CD4-positive, alpha-beta memory T cell (primary cell): ENCODE measurements at regions of chr15 and their contacts with region 1.

Region 1: DNA sequence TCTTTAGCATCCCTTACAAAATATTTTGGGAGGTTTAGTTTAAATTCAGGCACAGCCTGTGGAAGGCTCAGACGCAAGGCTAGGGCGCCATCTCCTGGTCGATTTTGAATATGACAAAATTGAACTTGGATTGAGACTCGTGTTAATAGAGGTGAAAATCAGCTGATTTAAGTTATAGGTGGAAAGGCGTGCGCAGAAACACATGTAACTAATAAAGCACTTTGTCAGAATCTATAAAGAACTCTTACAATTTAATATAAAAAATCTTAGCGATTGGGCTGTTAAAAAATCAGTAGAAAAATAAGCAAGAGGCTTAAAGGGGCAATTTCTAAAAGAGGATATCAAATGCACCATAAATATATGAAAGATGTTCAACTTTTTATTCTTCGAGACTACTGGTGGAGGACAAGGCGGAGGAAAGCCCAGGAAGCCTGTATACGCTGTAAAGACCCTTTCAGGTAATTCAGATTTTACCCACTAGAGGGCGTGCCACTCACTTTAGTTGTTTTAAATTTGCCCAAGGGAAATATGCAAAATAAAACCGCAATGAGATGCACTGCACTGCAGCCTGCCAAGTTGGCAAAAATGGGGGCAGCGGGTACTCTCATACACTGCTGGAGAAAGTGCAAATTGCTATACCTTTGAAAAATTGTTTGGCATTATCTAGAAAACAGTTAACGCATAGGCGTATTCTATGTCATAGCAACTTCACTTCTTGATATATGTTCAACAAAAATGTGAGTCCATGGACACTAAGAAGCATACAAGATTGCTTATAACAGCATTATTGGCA is 64.7 kb downstream of the SLC30A4 start:
- DNase-seq: peak; percentile 79 to 84 (median 81)
- H3K4me3 ChIP-seq: peak overlapping the region; percentile 21 to 51
- H3K4me3 Mint-ChIP-seq: peak overlapping the region; percentile 86 to 94 (median 88)
- H3K27ac ChIP-seq: peak overlapping the region; percentile 61
- H3K27ac Mint-ChIP-seq: peak overlapping the region; percentile 89 to 98 (median 96)
- H3K4me1 ChIP-seq: peaks cover 48% of the 10 kb centered on the region
- H3K4me1 Mint-ChIP-seq: peaks cover 34 to 51% (median 41%) of the 10 kb centered on the region in 4 donors
- H3K27me3 ChIP-seq: no peaks in the 10 kb centered on the region
- H3K27me3 Mint-ChIP-seq: no peaks in the 10 kb centered on the region

Region 2: DNA sequence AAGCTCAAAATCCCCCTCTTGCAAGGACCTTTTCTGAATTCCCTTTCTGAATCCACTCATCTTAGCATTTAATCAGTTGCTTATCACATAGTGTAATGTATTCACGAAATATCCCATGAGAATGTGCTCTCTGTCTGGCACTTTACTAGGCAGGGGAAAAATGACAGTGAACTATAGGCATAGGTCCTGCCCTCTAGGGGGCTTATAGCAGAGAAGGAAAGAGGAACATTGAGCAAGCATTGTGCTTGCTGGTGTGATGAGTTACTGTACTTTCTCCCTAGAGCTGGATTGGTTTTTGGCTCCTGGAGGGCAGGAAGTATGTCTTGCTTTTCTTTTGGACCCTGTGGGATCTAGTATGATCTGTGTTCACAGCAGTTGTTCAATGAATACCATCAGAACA is 370.3 kb before region 1 on chr15:
- CTCF ChIA-PET with region 1: no interaction called
- POLR2A ChIA-PET with region 1: no interaction called
- intact Hi-C with region 1: no loop called
- DNase-seq: no peak
- H3K4me3 ChIP-seq: no peak overlapping the region
- H3K4me3 Mint-ChIP-seq: no peak overlapping the region
- H3K27ac ChIP-seq: no peak overlapping the region
- H3K27ac Mint-ChIP-seq: no peak overlapping the region
- H3K4me1 ChIP-seq: no peaks in the 10 kb centered on the region
- H3K4me1 Mint-ChIP-seq: no peaks in the 10 kb centered on the region
- H3K27me3 ChIP-seq: no peaks in the 10 kb centered on the region
- H3K27me3 Mint-ChIP-seq: peaks cover 25 to 29% of the 10 kb centered on the region in 2 donors

Region 3: GRCh38 chr15:45126535-45127158 is 331.2 kb before region 1 on chr15:
- CTCF ChIA-PET with region 1: no interaction called
- POLR2A ChIA-PET with region 1: no interaction called
- intact Hi-C with region 1: loop called (anchors 2 kb)
- DNase-seq: peak in 4 of 5 donors; percentile 45 to 52 (median 48)
- H3K4me3 ChIP-seq: no peak overlapping the region
- H3K4me3 Mint-ChIP-seq: no peak overlapping the region
- H3K27ac ChIP-seq: no peak overlapping the region
- H3K27ac Mint-ChIP-seq: no peak overlapping the region
- H3K4me1 ChIP-seq: no peaks in the 10 kb centered on the region
- H3K4me1 Mint-ChIP-seq: peaks cover 0 to 8% (median 4%) of the 10 kb centered on the region in 4 donors
- H3K27me3 ChIP-seq: peaks cover 25% of the 10 kb centered on the region
- H3K27me3 Mint-ChIP-seq: peaks cover 34 to 51% of the 10 kb centered on the region in 2 donors

Region 4: DNA sequence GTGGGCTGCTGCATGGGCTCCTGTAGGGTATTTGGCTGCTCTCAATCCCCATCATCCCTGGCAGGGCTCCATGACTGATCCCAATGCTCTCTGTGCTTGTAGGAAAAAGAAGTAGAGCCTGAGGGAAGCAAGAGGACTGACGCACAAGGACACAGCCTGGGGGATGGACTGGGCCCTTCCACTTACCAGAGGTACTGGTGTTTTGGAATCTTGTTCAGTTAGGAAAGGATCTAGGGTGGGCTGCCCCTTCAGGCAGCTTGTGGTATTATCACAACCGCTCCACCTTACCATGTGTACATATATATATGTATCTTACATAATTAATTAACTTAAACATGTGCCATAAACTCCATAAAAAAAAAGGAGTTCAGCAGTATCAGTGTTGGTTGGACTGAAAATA is 204.5 kb before region 1 on chr15:
- CTCF ChIA-PET with region 1: no interaction called
- POLR2A ChIA-PET with region 1: no interaction called
- intact Hi-C with region 1: no loop called
- DNase-seq: no peak
- H3K4me3 ChIP-seq: no peak overlapping the region
- H3K4me3 Mint-ChIP-seq: no peak overlapping the region
- H3K27ac ChIP-seq: no peak overlapping the region
- H3K27ac Mint-ChIP-seq: no peak overlapping the region
- H3K4me1 ChIP-seq: no peaks in the 10 kb centered on the region
- H3K4me1 Mint-ChIP-seq: no peaks in the 10 kb centered on the region
- H3K27me3 ChIP-seq: no peaks in the 10 kb centered on the region
- H3K27me3 Mint-ChIP-seq: peaks cover 2 to 4% of the 10 kb centered on the region in 2 donors

Region 5: GRCh38 chr15:45307230-45307924 is 150.5 kb before region 1 on chr15:
- CTCF ChIA-PET with region 1: no interaction called
- POLR2A ChIA-PET with region 1: no interaction called
- intact Hi-C with region 1: loop called (anchors 2 kb)
- DNase-seq: peak in 1 of 5 donors; percentile 1
- H3K4me3 ChIP-seq: no peak overlapping the region
- H3K4me3 Mint-ChIP-seq: peak overlapping the region in 6 of 8 donors; percentile 53 to 81 (median 68)
- H3K27ac ChIP-seq: no peak overlapping the region
- H3K27ac Mint-ChIP-seq: no peak overlapping the region
- H3K4me1 ChIP-seq: peaks cover 5% of the 10 kb centered on the region
- H3K4me1 Mint-ChIP-seq: peaks cover 4 to 10% (median 6%) of the 10 kb centered on the region in 4 donors
- H3K27me3 ChIP-seq: peaks cover 4% of the 10 kb centered on the region
- H3K27me3 Mint-ChIP-seq: peaks cover 15 to 28% of the 10 kb centered on the region in 2 donors

Region 6: GRCh38 chr15:45522328-45523160 is 64.7 kb after region 1 on chr15 and contains the start of gene SLC30A4:
- CTCF ChIA-PET with region 1: interaction called, 5 read pairs
- POLR2A ChIA-PET with region 1: no interaction called
- intact Hi-C with region 1: loop called (anchors 2 kb)
- DNase-seq: peak; percentile 68 to 75 (median 69)
- H3K4me3 ChIP-seq: peak within 1 kb of the TSS; percentile 62 to 82
- H3K4me3 Mint-ChIP-seq: peak within 1 kb of the TSS; percentile 87 to 96 (median 94)
- H3K27ac ChIP-seq: peak within 1 kb of the TSS; percentile 54
- H3K27ac Mint-ChIP-seq: peak within 1 kb of the TSS; percentile 36 to 93 (median 88)
- H3K4me1 ChIP-seq: peaks cover 15% of the 10 kb centered on the region
- H3K4me1 Mint-ChIP-seq: peaks cover 18 to 28% (median 21%) of the 10 kb centered on the region in 4 donors
- H3K27me3 ChIP-seq: no peaks in the 10 kb centered on the region
- H3K27me3 Mint-ChIP-seq: no peaks in the 10 kb centered on the region
- total RNA-seq, gene SLC30A4: 3.6 to 3.8 TPM

Region 7: GRCh38 chr15:45611305-45611704 is 153.5 kb after region 1 on chr15:
- CTCF ChIA-PET with region 1: interaction called, 82 read pairs
- POLR2A ChIA-PET with region 1: interaction called, 3 read pairs
- intact Hi-C with region 1: loop called (anchors 1 kb)
- DNase-seq: no peak
- H3K4me3 ChIP-seq: no peak overlapping the region
- H3K4me3 Mint-ChIP-seq: no peak overlapping the region
- H3K27ac ChIP-seq: no peak overlapping the region
- H3K27ac Mint-ChIP-seq: no peak overlapping the region
- H3K4me1 ChIP-seq: no peaks in the 10 kb centered on the region
- H3K4me1 Mint-ChIP-seq: no peaks in the 10 kb centered on the region
- H3K27me3 ChIP-seq: no peaks in the 10 kb centered on the region
- H3K27me3 Mint-ChIP-seq: no peaks in the 10 kb centered on the region

Region 8: DNA sequence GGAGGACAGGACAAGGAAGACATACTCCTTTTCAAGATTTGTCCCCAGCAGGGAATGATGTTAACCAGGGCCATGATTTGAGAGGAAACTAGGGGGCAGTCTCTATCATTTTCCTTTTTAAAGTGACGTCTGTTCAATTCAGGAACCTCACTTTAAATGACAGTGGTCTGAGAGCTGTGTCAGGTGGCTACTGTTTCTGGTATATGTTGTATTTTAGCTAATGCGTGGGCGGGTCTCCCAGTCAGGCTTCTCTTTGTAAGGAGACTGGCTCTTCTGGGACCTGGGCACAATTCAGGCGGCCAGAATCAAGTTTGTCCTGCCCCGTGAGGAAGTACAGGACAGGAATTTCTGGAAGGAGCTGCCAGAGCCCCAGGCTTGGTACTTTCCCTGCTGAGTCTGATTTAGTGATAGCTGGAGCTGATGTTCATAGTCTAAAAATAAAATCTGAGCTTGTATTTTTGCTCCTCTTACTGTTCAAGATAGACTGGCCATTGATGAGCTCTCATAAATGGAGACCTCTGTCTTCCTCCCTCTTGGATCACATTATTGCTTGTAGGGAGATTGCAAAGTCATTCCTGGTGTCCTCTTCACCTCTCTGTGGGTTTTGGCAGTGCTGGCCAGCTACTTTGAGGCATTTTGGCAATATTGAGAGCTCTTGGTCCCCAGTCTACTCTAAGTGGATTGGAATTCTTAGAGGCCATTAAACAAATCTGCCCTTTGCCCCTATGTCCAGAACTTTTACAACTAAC is 202.6 kb after region 1 on chr15:
- CTCF ChIA-PET with region 1: no interaction called
- POLR2A ChIA-PET with region 1: no interaction called
- intact Hi-C with region 1: no loop called
- DNase-seq: no peak
- H3K4me3 ChIP-seq: no peak overlapping the region
- H3K4me3 Mint-ChIP-seq: no peak overlapping the region
- H3K27ac ChIP-seq: no peak overlapping the region
- H3K27ac Mint-ChIP-seq: peak overlapping the region in 6 of 7 donors; percentile 16 to 80 (median 47)
- H3K4me1 ChIP-seq: peaks cover 5% of the 10 kb centered on the region
- H3K4me1 Mint-ChIP-seq: peaks cover 19 to 40% (median 27%) of the 10 kb centered on the region in 4 donors
- H3K27me3 ChIP-seq: no peaks in the 10 kb centered on the region
- H3K27me3 Mint-ChIP-seq: no peaks in the 10 kb centered on the region